SK-N-SH (cell line): ENCODE measurements at regions of chr1 and their contacts with region 1.

Region 1: GRCh38 chr1:46021046-46021996 is 111.1 kb downstream of the PIK3R3 start:
- DNase-seq: no peak
- H3K4me3 ChIP-seq: no peak overlapping the region
- H3K27ac ChIP-seq: no peak overlapping the region
- H3K4me1 ChIP-seq: peaks cover 0 to 5% of the 10 kb centered on the region in 2 experiments; a peak in 1 of 4 replicates
- H3K27me3 ChIP-seq: no peaks in the 10 kb centered on the region
- CTCF ChIP-seq: no peak
- EP300 ChIP-seq: no peak
- RAD21 ChIP-seq: no peak

Region 2: DNA sequence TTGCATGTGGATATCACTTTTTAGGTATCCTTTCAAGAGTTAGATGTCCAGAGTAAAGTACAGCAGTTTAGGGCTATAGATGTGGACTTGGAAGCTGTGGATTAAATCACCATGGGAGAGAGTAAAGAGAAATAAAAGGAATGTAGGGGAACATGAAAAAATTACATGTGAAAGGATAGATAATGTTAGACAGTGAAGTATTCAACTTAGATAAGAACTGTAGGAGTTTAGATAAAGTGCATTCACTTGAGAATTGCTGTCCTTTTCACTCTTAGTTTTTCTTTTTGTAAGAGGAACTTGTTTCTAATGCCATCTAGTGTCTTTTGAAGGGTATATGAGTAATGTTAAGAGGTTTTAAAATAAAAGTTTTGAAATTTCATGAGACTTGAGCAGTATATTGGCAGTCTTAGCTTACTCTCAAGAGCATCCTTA is 177.8 kb before region 1 on chr1:
- CTCF ChIA-PET with region 1: no interaction called
- POLR2A ChIA-PET with region 1: no interaction called
- DNase-seq: no peak
- H3K4me3 ChIP-seq: no peak overlapping the region
- H3K27ac ChIP-seq: no peak overlapping the region
- H3K4me1 ChIP-seq: peaks cover 2 to 21% of the 10 kb centered on the region in 2 experiments; a peak in 2 of 4 replicates
- H3K27me3 ChIP-seq: no peaks in the 10 kb centered on the region
- CTCF ChIP-seq: peak; percentile 56
- EP300 ChIP-seq: no peak
- RAD21 ChIP-seq: peak; percentile 44

Region 3: DNA sequence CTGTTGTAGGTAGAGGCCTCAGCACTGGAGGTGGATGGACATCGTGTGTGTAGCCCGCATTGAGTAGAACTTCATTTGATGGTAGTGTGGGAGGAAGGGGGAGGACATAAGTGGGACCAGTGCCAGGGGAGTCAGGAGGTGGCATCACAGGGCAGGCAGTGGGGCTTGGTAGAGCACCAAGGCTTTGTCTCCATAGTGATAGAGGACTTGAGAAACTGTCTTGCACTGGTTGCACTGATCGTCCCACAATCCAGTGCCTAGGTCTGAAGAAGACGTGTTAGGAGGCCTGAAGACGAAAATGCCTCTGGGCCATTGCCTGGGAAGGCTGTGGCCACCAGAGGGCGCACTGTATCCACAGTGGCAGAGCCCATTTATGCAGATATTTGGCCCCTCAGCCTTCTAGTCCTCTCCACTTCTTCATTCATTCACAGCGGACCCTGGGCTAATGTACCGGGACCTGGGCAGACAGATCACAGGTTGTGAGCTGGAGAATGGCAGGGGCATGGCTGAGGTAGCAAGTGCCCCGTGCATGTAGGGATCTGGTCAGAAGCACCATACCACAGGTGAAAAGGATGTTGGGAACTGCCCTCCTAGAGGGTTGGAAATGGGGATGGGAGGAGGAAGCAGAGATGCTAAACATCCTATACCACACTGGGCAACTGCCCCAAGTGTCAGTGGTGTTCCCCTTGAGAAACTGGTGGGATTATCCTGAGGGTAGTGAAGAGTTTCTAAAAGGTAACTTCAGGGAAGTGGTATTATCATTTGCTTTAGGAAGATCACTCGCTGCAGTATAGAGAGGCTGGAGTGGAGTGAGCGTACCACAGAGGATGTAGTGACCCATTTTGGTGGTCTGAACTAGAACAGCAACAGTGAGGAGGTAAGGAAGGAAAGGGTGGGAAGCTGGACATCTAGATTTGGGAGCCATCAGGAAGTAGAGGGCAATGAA is 15.8 kb after region 1 on chr1:
- CTCF ChIA-PET with region 1: interaction called, 13 read pairs
- POLR2A ChIA-PET with region 1: interaction called, 3 read pairs
- DNase-seq: peak; percentile 82
- H3K4me3 ChIP-seq: peak overlapping the region in 1 of 2 experiments; percentile 40; a peak in 1 of 4 replicates
- H3K27ac ChIP-seq: no peak overlapping the region; a peak in 1 of 4 replicates
- H3K4me1 ChIP-seq: peaks cover 0 to 29% of the 10 kb centered on the region in 2 experiments; a peak in 2 of 4 replicates
- H3K27me3 ChIP-seq: no peaks in the 10 kb centered on the region
- CTCF ChIP-seq: peak; percentile 97
- EP300 ChIP-seq: no peak
- RAD21 ChIP-seq: peak; percentile 90